B cell (primary cell): ENCODE measurements at regions of chr1 and their contacts with region 1.

Region 1: GRCh38 chr1:24586970-24587820 is 31.3 kb downstream of the NCMAP start:
- DNase-seq: peak; percentile 81
- ATAC-seq: peak; percentile 94
- H3K4me3 ChIP-seq: no peak overlapping the region
- H3K4me3 Mint-ChIP-seq: no peak overlapping the region
- H3K27ac ChIP-seq: no peak overlapping the region
- H3K27ac Mint-ChIP-seq: no peak overlapping the region
- H3K4me1 ChIP-seq: peaks cover 4% of the 10 kb centered on the region in 2 donors
- H3K4me1 Mint-ChIP-seq: peaks cover 8% of the 10 kb centered on the region
- H3K27me3 ChIP-seq: peaks cover 0 to 3% (median 0%) of the 10 kb centered on the region in 4 experiments
- H3K27me3 Mint-ChIP-seq: no peaks in the 10 kb centered on the region
- CTCF ChIP-seq: peak; percentile 81

Region 2: GRCh38 chr1:24070821-24071393 is 516.3 kb before region 1 on chr1:
- CTCF ChIA-PET with region 1: interaction called, 9 read pairs
- POLR2A ChIA-PET with region 1: no interaction called
- intact Hi-C with region 1: loop called (anchors 2 kb)
- DNase-seq: peak; percentile 82
- ATAC-seq: peak; percentile 88
- H3K4me3 ChIP-seq: no peak overlapping the region
- H3K4me3 Mint-ChIP-seq: no peak overlapping the region
- H3K27ac ChIP-seq: no peak overlapping the region
- H3K27ac Mint-ChIP-seq: no peak overlapping the region
- H3K4me1 ChIP-seq: peaks cover 0 to 3% of the 10 kb centered on the region in 2 donors
- H3K4me1 Mint-ChIP-seq: peaks cover 4% of the 10 kb centered on the region
- H3K27me3 ChIP-seq: peaks cover 0 to 4% (median 1%) of the 10 kb centered on the region in 4 experiments
- H3K27me3 Mint-ChIP-seq: peaks cover 8% of the 10 kb centered on the region
- CTCF ChIP-seq: peak; percentile 93

Region 3: GRCh38 chr1:24364975-24365678 is 222.1 kb before region 1 on chr1:
- CTCF ChIA-PET with region 1: no interaction called
- POLR2A ChIA-PET with region 1: no interaction called
- intact Hi-C with region 1: no loop called
- DNase-seq: no peak
- ATAC-seq: no peak
- H3K4me3 ChIP-seq: no peak overlapping the region
- H3K4me3 Mint-ChIP-seq: no peak overlapping the region
- H3K27ac ChIP-seq: no peak overlapping the region
- H3K27ac Mint-ChIP-seq: no peak overlapping the region
- H3K4me1 ChIP-seq: no peaks in the 10 kb centered on the region
- H3K4me1 Mint-ChIP-seq: no peaks in the 10 kb centered on the region
- H3K27me3 ChIP-seq: no peaks in the 10 kb centered on the region
- H3K27me3 Mint-ChIP-seq: no peaks in the 10 kb centered on the region
- CTCF ChIP-seq: no peak

Region 4: DNA sequence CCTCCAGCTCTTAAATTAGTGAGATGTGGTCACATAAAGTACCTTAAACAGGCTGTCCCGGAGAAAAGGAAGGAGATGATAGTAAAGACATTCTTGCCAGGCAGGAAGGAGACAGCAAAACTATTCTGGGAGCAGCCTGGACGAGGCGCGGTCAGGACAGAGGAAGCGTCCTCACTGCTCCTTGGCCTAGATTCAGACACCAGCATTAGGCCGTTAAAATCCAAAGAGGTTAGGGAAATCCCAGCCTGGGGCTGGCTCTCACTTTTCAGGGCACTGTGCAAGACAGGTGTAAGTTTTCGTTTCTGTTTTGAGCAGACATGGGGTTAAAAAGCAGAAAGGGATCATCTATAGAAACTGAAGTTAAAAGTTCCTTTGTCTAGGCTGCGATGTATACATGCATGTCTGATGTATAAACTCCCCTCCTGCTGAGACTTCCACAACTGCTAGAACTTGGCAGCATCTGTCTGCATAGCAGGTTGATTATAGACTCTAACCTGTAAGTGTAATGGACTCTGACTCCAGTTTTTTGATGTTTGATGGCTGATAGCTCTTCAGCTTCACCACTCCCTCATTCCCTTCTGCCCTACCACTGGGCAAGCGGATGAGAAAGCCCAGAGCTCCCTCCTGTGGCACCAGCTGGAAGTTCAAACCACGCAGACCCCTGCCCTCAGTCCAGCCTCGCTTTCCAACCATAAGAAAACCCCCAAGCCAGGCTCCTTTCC is 195.2 kb before region 1 on chr1:
- CTCF ChIA-PET with region 1: interaction called, 82 read pairs
- POLR2A ChIA-PET with region 1: no interaction called
- intact Hi-C with region 1: loop called (anchors 1 kb)
- DNase-seq: peak; percentile 80
- ATAC-seq: peak; percentile 75
- H3K4me3 ChIP-seq: peak overlapping the region in 2 of 5 experiments; percentile 5 to 37
- H3K4me3 Mint-ChIP-seq: peak overlapping the region; percentile 81
- H3K27ac ChIP-seq: peak overlapping the region; percentile 81 to 92
- H3K27ac Mint-ChIP-seq: peak overlapping the region; percentile 92
- H3K4me1 ChIP-seq: peaks cover 26 to 33% of the 10 kb centered on the region in 2 donors
- H3K4me1 Mint-ChIP-seq: peaks cover 31% of the 10 kb centered on the region
- H3K27me3 ChIP-seq: no peaks in the 10 kb centered on the region
- H3K27me3 Mint-ChIP-seq: no peaks in the 10 kb centered on the region
- CTCF ChIP-seq: peak; percentile 74

Region 5: GRCh38 chr1:24481101-24481500 is 106.1 kb before region 1 on chr1:
- CTCF ChIA-PET with region 1: interaction called, 11 read pairs
- POLR2A ChIA-PET with region 1: no interaction called
- intact Hi-C with region 1: no loop called
- DNase-seq: peak; percentile 71
- ATAC-seq: peak; percentile 90
- H3K4me3 ChIP-seq: peak overlapping the region in 1 of 5 experiments; percentile 59
- H3K4me3 Mint-ChIP-seq: peak overlapping the region; percentile 75
- H3K27ac ChIP-seq: peak overlapping the region; percentile 52 to 75
- H3K27ac Mint-ChIP-seq: peak overlapping the region; percentile 92
- H3K4me1 ChIP-seq: peaks cover 17 to 22% of the 10 kb centered on the region in 2 donors
- H3K4me1 Mint-ChIP-seq: peaks cover 27% of the 10 kb centered on the region
- H3K27me3 ChIP-seq: no peaks in the 10 kb centered on the region
- H3K27me3 Mint-ChIP-seq: no peaks in the 10 kb centered on the region
- CTCF ChIP-seq: no peak

Region 6: DNA sequence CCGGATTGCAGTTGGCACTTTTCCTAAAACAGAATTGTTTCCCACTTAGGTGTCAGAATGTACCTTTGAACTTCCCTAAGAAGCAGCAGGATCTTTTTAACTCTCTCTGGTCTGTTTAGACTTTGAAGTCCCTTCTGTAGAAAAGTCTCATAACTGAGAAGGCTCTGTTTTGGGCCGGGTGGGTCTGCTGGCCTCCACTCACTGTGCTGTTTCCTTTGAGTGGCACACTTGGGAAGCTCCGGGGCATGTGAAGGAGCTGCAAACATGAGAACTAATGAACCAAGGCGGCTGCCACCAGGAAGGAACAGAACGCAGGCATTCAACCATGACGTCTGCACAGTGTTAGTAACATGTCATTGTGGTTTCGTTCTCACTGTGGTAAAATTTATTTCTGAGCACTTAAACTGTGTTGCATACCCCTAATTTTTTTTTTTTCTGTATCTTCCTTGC is 50.8 kb before region 1 on chr1:
- CTCF ChIA-PET with region 1: interaction called, 16 read pairs
- POLR2A ChIA-PET with region 1: interaction called, 4 read pairs
- intact Hi-C with region 1: loop called (anchors 10 kb)
- DNase-seq: peak; percentile 85
- ATAC-seq: peak; percentile 76
- H3K4me3 ChIP-seq: peak overlapping the region in 3 of 5 experiments; percentile 19 to 45 (median 20)
- H3K4me3 Mint-ChIP-seq: peak overlapping the region; percentile 83
- H3K27ac ChIP-seq: peak overlapping the region; percentile 74 to 97
- H3K27ac Mint-ChIP-seq: peak overlapping the region; percentile 98
- H3K4me1 ChIP-seq: peaks cover 54 to 60% of the 10 kb centered on the region in 2 donors
- H3K4me1 Mint-ChIP-seq: peaks cover 68% of the 10 kb centered on the region
- H3K27me3 ChIP-seq: no peaks in the 10 kb centered on the region
- H3K27me3 Mint-ChIP-seq: no peaks in the 10 kb centered on the region
- CTCF ChIP-seq: no peak

Region 7: GRCh38 chr1:24642481-24643361 is 55.5 kb after region 1 on chr1 and contains the start of gene SRRM1:
- CTCF ChIA-PET with region 1: interaction called, 7 read pairs
- POLR2A ChIA-PET with region 1: interaction called, 10 read pairs
- intact Hi-C with region 1: no loop called
- DNase-seq: peak; percentile 100
- ATAC-seq: peak; percentile 90
- H3K4me3 ChIP-seq: peak within 1 kb of the TSS; percentile 81 to 99 (median 97)
- H3K4me3 Mint-ChIP-seq: peak within 1 kb of the TSS; percentile 96
- H3K27ac ChIP-seq: peak within 1 kb of the TSS; percentile 98 to 99
- H3K27ac Mint-ChIP-seq: peak within 1 kb of the TSS; percentile 99
- H3K4me1 ChIP-seq: peaks cover 17 to 25% of the 10 kb centered on the region in 2 donors
- H3K4me1 Mint-ChIP-seq: peaks cover 36% of the 10 kb centered on the region
- H3K27me3 ChIP-seq: no peaks in the 10 kb centered on the region
- H3K27me3 Mint-ChIP-seq: no peaks in the 10 kb centered on the region
- CTCF ChIP-seq: no peak
- total RNA-seq, gene SRRM1: 226 and 238 TPM in 2 replicates